Right cardiac atrium (tissue), 5 donors: ENCODE measurements at regions of chr16 and their contacts with region 1.

Region 1: DNA sequence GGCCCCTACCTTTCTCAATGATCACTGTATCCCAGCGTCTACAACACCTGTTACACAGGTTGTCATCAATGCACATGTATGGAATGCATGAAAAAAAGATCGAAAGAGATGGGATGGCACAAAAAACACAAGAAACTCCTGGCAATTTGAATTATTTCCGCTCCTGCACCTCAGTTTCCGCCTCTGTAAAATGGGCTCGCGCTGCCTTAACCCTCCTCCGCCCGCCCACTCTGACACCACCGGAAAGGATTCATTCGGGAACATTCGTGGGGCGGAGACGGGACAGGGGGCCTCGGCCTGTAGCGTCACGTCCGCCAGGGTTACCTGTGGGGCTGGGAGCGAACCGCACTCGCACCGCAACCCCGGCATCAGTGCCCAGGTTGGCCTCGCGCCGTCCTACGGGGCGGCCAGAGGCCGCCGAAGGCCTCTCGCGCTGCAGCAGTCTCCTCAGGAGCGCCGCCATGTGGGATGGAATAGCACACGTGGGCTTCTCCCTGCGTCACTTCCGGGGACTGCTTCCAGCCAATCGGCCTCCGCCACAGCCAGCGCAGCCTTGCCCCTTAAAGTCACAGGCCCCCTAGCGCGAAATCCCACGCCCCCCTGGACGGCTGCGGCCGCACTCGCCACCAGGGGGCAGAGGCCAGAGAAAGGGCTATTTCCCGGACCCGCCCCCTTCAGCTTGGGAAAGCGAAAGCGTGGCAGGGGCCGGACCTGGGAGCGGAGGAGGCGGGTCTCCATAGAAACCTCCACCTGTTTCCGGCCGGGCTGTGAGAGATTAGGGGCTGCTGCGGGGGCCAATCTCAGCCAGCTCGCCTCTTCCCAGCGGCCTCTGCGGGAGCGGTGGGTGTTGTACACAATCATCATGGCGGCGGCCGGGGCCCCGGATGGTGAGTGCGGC is at the starts of genes EARS2 and UBFD1:
- DNase-seq: peak; percentile 98 to 99 (median 99)
- ATAC-seq: peak; percentile 98
- H3K4me3 ChIP-seq: peak within 1 kb of the TSS; percentile 76
- H3K27ac ChIP-seq: peak within 1 kb of the TSS; percentile 61
- H3K4me1 ChIP-seq: peaks cover 6% of the 10 kb centered on the region
- H3K27me3 ChIP-seq: no peaks in the 10 kb centered on the region
- total RNA-seq, gene EARS2: 11.0 to 18.2 (median 13.7) TPM
- total RNA-seq, gene UBFD1: 47.8 to 69.5 (median 61.8) TPM

Region 2: DNA sequence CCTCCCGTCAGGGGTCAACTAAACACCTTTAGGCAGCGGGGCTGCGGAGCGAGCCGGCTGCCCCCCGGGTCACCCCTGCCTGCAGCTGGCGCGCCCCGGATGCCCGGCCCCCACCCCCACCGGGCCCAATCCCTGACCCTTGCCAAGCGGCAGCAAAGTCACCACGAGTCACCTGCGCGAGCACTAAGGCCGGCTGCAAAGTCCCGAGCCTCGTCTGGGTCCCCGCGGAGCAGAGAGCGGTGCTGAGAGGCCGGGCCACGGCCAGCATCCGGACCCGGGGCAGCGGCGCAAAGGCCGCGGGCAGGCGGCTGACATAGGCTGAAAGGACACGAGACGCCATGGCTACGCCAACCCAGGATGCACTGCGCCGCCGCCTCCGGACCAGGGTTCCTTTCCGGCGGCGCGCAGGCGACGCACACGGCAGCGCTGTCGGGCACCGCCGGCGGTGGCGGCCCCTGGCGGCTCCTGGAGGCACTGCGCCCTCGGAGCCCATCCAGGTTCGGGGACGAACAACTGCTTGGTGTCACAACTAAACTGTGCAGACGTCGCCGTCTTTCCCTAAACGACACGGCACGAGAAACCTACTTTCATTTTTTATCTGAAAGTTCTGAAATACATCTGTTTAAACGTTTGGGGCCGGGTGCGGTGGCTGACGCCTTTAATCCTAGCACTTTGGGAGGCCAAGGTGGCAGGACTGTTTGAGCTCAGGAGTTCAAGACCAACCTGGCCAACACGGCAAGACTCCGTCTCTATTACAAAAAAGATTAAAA is 39.0 kb after region 1 on chr16 and contains the start of gene NDUFAB1:
- intact Hi-C with region 1: loop called in 3 of 4 experiments (anchors 2 to 5 kb)
- DNase-seq: peak; percentile 91 to 96 (median 96)
- ATAC-seq: peak; percentile 97 to 98
- H3K4me3 ChIP-seq: peak within 1 kb of the TSS; percentile 68
- H3K27ac ChIP-seq: peak within 1 kb of the TSS; percentile 83
- H3K4me1 ChIP-seq: peaks cover 3% of the 10 kb centered on the region
- H3K27me3 ChIP-seq: no peaks in the 10 kb centered on the region
- total RNA-seq, gene NDUFAB1: 378 to 517 (median 448) TPM